ENCODE measurements at regions of chr2 and their contacts with region 1.

Region 1: DNA sequence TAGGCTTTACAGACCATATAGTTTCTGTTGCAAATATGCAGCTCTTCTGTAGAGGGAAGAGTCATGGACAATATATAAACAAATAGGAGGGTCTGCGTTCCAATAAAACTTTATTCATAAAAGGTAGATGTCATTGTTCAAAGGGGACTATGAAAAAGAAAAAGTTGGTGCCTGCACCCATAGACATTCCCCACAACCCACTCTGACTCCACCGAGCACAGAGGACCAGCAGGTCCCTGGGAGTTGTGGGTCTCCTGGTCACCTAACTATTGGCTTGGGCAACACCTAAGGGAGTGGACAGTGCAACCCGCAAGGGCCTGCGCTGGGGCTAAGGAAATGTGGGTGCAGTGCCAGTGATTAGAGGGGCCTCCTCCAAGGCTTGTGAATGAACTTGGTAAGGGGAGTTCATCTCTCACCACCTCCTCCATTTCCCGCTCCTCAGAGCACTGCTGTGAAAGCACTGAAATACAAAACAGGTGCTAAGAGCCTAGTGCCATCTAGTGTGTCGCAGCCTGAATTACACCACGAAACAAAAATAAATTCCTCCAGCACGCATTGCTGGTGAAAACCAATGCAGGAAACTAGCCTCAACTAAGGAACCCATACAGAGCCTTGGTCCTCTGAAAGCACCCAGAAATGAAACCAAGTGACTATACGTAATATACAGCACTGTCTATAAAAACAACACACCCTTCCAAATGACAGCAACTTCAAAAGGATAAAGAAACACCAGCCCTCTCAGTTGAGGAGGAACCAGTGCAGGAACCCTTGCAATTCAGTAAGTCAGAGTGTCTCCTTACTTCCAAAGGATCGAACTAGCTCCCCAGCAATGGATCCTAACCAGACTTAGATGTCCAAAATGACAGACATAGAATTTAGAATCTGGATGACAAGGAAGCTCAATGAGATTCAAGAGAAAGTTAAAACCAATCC is 166.6 kb downstream of the RNF144A start:
- DNase-seq: peak in 3 of 9 donors; percentile 13 to 30 (median 19)
- ATAC-seq: no peak
- H3K4me3 ChIP-seq: no peak overlapping the region
- H3K4me3 Mint-ChIP-seq: no peak overlapping the region
- H3K27ac ChIP-seq: no peak overlapping the region
- H3K27ac Mint-ChIP-seq: no peak overlapping the region
- H3K4me1 ChIP-seq: no peaks in the 10 kb centered on the region
- H3K4me1 Mint-ChIP-seq: no peaks in the 10 kb centered on the region
- H3K27me3 ChIP-seq: peaks cover 0 to 3% of the 10 kb centered on the region in 2 donors
- H3K27me3 Mint-ChIP-seq: peaks cover 0 to 8% (median 0%) of the 10 kb centered on the region in 5 donors

Region 2: DNA sequence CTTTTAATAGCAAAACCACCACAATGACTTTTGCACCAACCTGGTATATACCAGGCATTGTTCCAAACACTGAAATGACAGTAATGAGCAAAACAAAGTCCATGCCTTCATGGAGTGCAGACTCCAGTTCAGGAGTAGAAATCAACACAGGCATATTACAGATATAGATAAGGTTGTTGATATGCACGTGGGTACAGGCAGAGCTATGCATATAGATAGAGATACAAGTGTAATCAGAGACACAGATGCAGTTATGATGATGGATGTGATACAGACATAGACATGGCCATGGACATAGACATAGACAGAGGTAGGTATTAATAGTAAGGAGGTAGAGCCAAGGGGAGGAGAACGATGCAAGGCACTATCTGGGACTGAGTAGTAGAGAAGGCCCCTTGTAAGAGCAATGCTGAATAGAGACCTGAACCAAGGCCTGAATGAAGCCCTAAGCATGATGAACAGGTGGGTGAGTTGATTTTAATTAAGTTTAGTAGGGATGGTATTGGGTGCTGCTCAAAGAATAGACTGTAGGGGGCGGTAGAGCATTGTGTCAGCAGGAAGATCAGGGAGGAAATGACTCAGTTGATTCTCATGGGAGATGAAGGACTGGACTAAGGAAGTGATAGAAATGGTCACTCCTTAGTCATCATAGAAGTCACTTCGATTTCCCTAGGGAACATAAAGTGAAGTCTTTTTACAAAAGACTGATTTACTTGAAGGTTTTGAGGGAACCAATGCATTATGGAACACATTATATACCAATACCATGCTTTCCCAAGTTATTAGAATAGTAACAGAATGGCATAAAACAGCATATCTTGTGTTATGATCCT is 257.5 kb before region 1 on chr2:
- CTCF ChIA-PET with region 1: no interaction called
- POLR2A ChIA-PET with region 1: no interaction called
- intact Hi-C with region 1: loop called in 1 of 2 experiments (anchors 1 kb)
- DNase-seq: peak in 8 of 9 donors; percentile 26 to 58 (median 51)
- ATAC-seq: peak; percentile 92
- H3K4me3 ChIP-seq: no peak overlapping the region
- H3K4me3 Mint-ChIP-seq: no peak overlapping the region
- H3K27ac ChIP-seq: no peak overlapping the region
- H3K27ac Mint-ChIP-seq: no peak overlapping the region
- H3K4me1 ChIP-seq: no peaks in the 10 kb centered on the region
- H3K4me1 Mint-ChIP-seq: peaks cover 0 to 14% (median 11%) of the 10 kb centered on the region in 7 donors
- H3K27me3 ChIP-seq: no peaks in the 10 kb centered on the region
- H3K27me3 Mint-ChIP-seq: no peaks in the 10 kb centered on the region

Region 3: GRCh38 chr2:7026742-7027141 is 57.1 kb before region 1 on chr2:
- CTCF ChIA-PET with region 1: no interaction called
- POLR2A ChIA-PET with region 1: no interaction called
- intact Hi-C with region 1: no loop called
- DNase-seq: no peak
- ATAC-seq: no peak
- H3K4me3 ChIP-seq: no peak overlapping the region
- H3K4me3 Mint-ChIP-seq: no peak overlapping the region
- H3K27ac ChIP-seq: no peak overlapping the region
- H3K27ac Mint-ChIP-seq: peak overlapping the region in 5 of 9 donors; percentile 10 to 69 (median 36)
- H3K4me1 ChIP-seq: peaks cover 0 to 7% of the 10 kb centered on the region in 2 donors
- H3K4me1 Mint-ChIP-seq: peaks cover 10 to 21% (median 17%) of the 10 kb centered on the region in 7 donors
- H3K27me3 ChIP-seq: no peaks in the 10 kb centered on the region
- H3K27me3 Mint-ChIP-seq: no peaks in the 10 kb centered on the region

Region 4: DNA sequence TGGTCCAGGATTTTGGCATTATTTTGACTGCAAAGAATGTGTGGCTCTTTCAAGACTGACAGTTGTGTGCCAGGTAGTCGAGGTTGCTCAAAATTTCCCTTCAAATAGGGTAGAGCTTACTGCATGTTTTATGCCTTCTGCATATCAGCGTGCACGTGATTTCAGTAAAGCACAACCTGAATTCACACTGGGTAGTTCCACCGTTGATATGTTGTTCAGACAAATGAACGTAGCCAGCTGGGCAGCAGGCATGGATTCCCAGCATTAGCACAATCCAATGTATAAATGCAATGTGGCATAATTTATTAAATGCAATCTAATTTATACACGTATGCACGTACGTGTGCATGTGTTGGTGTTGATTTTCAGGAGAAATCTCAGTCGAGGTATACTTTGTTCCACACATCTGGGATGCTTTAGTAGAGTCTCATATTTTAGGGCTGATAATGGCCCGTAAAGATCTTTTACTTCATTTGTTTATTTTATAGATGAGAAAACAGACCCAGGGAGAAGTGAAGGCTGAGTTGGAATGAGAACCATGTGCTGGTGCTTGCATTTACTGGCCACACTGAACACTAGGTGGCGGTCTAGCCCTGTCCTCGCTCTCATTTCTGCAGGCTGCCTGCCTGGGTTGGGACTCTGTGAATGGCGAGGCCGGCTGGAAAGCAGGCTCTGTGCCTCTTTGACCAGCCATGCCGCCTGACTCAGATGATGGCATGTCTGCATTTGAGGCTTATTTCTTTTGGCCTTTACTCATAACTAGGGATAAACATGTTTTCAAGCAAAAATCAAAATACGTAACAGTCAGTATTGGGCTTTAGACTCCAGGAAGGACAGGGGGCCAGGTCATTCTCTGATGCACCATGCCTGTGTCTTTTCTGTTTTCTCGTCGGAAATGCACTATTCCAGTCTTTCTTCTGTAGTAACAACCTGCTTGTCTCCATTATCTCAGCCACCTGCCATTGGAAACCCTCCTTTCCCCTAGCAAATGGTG is 46.2 kb before region 1 on chr2:
- CTCF ChIA-PET with region 1: no interaction called
- POLR2A ChIA-PET with region 1: no interaction called
- intact Hi-C with region 1: loop called in 1 of 2 experiments (anchors 1 kb)
- DNase-seq: peak; percentile 16 to 64 (median 56)
- ATAC-seq: peak; percentile 90
- H3K4me3 ChIP-seq: no peak overlapping the region
- H3K4me3 Mint-ChIP-seq: no peak overlapping the region
- H3K27ac ChIP-seq: no peak overlapping the region
- H3K27ac Mint-ChIP-seq: peak overlapping the region in 8 of 9 donors; percentile 25 to 74 (median 61)
- H3K4me1 ChIP-seq: no peaks in the 10 kb centered on the region
- H3K4me1 Mint-ChIP-seq: peaks cover 2 to 20% (median 10%) of the 10 kb centered on the region in 7 donors
- H3K27me3 ChIP-seq: no peaks in the 10 kb centered on the region
- H3K27me3 Mint-ChIP-seq: no peaks in the 10 kb centered on the region

Region 5: GRCh38 chr2:7118606-7119503 is 35.0 kb after region 1 on chr2:
- CTCF ChIA-PET with region 1: no interaction called
- POLR2A ChIA-PET with region 1: no interaction called
- intact Hi-C with region 1: loop called in 1 of 2 experiments (anchors 1 kb)
- DNase-seq: peak in 2 of 9 donors; percentile 10 to 24
- ATAC-seq: no peak
- H3K4me3 ChIP-seq: no peak overlapping the region
- H3K4me3 Mint-ChIP-seq: no peak overlapping the region
- H3K27ac ChIP-seq: no peak overlapping the region
- H3K27ac Mint-ChIP-seq: no peak overlapping the region
- H3K4me1 ChIP-seq: no peaks in the 10 kb centered on the region
- H3K4me1 Mint-ChIP-seq: no peaks in the 10 kb centered on the region
- H3K27me3 ChIP-seq: no peaks in the 10 kb centered on the region
- H3K27me3 Mint-ChIP-seq: peaks cover 0 to 4% (median 0%) of the 10 kb centered on the region in 5 donors

Measured in naive thymus-derived CD4-positive, alpha-beta T cell (primary cell).